ENCODE measurements at regions of chr18 and their contacts with region 1.

Region 1: DNA sequence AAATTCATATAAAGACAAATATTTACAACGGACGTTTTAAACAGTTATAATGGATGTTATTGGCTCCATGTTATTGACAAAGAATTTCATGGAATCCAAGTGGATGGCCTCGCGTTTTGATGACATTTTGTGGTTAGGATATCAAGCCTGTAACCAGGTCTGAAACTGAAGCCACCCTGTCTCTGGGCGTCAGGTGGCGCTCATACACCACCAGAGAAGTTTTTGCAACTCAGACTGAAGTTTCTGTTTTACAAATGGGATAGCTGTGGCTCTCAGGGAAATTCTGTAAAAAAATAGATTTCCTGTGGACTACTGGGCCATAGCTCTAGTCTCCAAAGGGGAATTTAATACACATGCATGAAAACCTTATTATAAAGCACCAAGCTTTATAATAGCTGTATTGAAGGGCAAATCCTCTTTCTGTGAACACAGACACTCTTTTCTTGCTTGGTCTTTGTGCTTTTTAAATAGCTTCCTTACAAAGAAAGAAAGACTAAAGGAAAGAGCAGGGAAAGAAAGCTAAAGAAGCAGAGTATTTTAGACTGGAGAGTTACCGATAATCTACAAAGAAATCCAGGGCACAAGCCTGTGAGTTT is 86.7 kb downstream of the C18orf54 start:
- DNase-seq: peak; percentile 57 to 73 (median 69)
- H3K4me3 ChIP-seq: no peak overlapping the region
- H3K27ac ChIP-seq: no peak overlapping the region
- H3K4me1 ChIP-seq: no peaks in the 10 kb centered on the region
- H3K27me3 ChIP-seq: peaks cover 0 to 7% (median 0%) of the 10 kb centered on the region in 5 experiments

Region 2: DNA sequence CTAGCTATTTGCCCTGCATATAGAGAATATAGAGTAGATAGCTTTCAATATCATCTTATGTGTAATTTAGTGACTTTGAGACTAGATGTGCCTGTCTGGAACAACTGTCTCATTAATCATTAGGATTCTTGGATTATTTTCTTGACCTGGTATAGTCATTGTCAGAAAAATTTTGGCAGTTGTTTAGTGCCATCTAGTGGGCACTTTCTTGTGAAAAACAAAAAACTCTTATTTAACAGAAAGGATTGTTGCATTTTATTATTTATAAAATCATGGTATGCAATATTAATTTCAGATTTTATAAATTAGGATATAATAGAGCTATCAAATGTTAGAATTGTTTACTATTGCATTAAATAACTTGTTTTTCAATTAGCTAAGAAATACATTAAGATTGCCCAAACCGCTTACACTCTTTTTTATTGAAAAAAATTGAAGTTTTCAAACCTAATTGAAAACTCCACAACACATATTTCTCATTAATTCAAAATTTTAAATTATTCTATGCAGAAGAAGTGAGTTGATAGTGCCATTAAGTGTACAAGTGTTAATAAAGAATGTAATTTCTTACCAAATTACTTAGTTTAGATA is 227.0 kb after region 1 on chr18:
- CTCF ChIA-PET with region 1: interaction called, 18 read pairs
- POLR2A ChIA-PET with region 1: no interaction called
- DNase-seq: peak; percentile 42 to 66 (median 59)
- H3K4me3 ChIP-seq: no peak overlapping the region
- H3K27ac ChIP-seq: no peak overlapping the region
- H3K4me1 ChIP-seq: no peaks in the 10 kb centered on the region
- H3K27me3 ChIP-seq: no peaks in the 10 kb centered on the region

Measured in common myeloid progenitor, CD34-positive (primary cell).